Naive thymus-derived CD4-positive, alpha-beta T cell (primary cell): ENCODE measurements at regions of chr7 and their contacts with region 1.

Region 1: GRCh38 chr7:105210721-105211205 is 178.0 kb downstream of the SRPK2 start:
- DNase-seq: peak in 2 of 9 donors; percentile 8 to 9
- ATAC-seq: peak; percentile 55
- H3K4me3 ChIP-seq: no peak overlapping the region
- H3K4me3 Mint-ChIP-seq: peak overlapping the region in 9 of 10 donors; percentile 7 to 62 (median 42)
- H3K27ac ChIP-seq: peak overlapping the region; percentile 30
- H3K27ac Mint-ChIP-seq: peak overlapping the region; percentile 43 to 87 (median 82)
- H3K4me1 ChIP-seq: peaks cover 0 to 26% of the 10 kb centered on the region in 2 donors
- H3K4me1 Mint-ChIP-seq: peaks cover 40 to 99% (median 90%) of the 10 kb centered on the region in 7 donors
- H3K27me3 ChIP-seq: no peaks in the 10 kb centered on the region
- H3K27me3 Mint-ChIP-seq: no peaks in the 10 kb centered on the region

Region 2: DNA sequence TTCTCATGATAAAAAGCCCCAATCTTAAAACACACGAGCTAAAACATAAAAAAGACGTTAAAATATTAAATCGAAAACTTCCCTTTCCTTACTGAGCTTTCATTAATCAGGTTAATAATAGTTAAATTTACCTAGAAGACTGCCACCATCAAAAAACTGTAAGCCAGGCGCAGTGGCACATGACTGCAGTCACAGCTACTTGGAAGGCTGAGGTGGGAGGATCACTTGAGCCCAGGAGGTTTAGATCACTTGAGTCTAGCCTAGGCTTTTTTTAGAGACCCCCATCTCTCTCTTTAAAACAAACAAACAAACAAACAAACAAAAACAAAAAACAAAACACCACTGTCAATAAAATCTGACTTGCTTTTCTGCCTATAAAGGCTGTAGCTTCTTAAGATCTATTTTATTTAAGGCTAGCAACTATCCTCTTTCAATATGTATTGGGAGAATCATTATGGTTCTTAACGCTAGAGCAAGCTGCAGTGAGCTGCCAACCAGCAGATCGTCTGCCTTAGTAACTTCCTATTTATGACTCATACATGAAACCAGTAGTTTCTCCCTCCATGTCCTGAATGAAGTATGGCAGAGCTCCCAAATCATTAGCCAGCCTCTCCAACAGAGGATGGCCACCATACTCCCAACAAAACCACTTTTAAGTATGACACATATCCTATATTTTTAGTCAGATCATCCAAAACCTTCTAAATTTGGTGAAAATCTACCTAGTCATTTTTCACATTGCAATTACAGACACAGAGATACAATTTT is 14.3 kb after region 1 on chr7:
- CTCF ChIA-PET with region 1: interaction called, 3 read pairs
- POLR2A ChIA-PET with region 1: no interaction called
- intact Hi-C with region 1: loop called in 1 of 2 experiments (anchors 2 kb)
- DNase-seq: no peak
- ATAC-seq: peak; percentile 69
- H3K4me3 ChIP-seq: no peak overlapping the region
- H3K4me3 Mint-ChIP-seq: peak overlapping the region in 3 of 10 donors; percentile 1 to 35 (median 25)
- H3K27ac ChIP-seq: no peak overlapping the region
- H3K27ac Mint-ChIP-seq: peak overlapping the region in 5 of 9 donors; percentile 11 to 41 (median 38)
- H3K4me1 ChIP-seq: peaks cover 0 to 6% of the 10 kb centered on the region in 2 donors
- H3K4me1 Mint-ChIP-seq: peaks cover 15 to 52% (median 45%) of the 10 kb centered on the region in 7 donors
- H3K27me3 ChIP-seq: no peaks in the 10 kb centered on the region
- H3K27me3 Mint-ChIP-seq: no peaks in the 10 kb centered on the region

Region 3: GRCh38 chr7:105309235-105310169 is 98.7 kb after region 1 on chr7:
- CTCF ChIA-PET with region 1: no interaction called
- POLR2A ChIA-PET with region 1: no interaction called
- intact Hi-C with region 1: no loop called
- DNase-seq: no peak
- ATAC-seq: no peak
- H3K4me3 ChIP-seq: no peak overlapping the region
- H3K4me3 Mint-ChIP-seq: peak overlapping the region in 3 of 10 donors; percentile 1 to 14 (median 4)
- H3K27ac ChIP-seq: no peak overlapping the region
- H3K27ac Mint-ChIP-seq: peak overlapping the region in 5 of 9 donors; percentile 3 to 61 (median 19)
- H3K4me1 ChIP-seq: peaks cover 16% of the 10 kb centered on the region in 2 donors
- H3K4me1 Mint-ChIP-seq: peaks cover 29 to 78% (median 61%) of the 10 kb centered on the region in 7 donors
- H3K27me3 ChIP-seq: no peaks in the 10 kb centered on the region
- H3K27me3 Mint-ChIP-seq: no peaks in the 10 kb centered on the region

Region 4: GRCh38 chr7:106731187-106731586 is 1520.4 kb after region 1 on chr7:
- CTCF ChIA-PET with region 1: no interaction called
- POLR2A ChIA-PET with region 1: no interaction called
- intact Hi-C with region 1: loop called in 1 of 2 experiments (anchors 5 kb)
- DNase-seq: peak in 3 of 9 donors; percentile 11 to 23 (median 11)
- ATAC-seq: peak; percentile 34
- H3K4me3 ChIP-seq: no peak overlapping the region
- H3K4me3 Mint-ChIP-seq: peak overlapping the region in 6 of 10 donors; percentile 29 to 53 (median 42)
- H3K27ac ChIP-seq: no peak overlapping the region
- H3K27ac Mint-ChIP-seq: peak overlapping the region in 2 of 9 donors; percentile 25 to 37
- H3K4me1 ChIP-seq: peaks cover 0 to 9% of the 10 kb centered on the region in 2 donors
- H3K4me1 Mint-ChIP-seq: peaks cover 18 to 30% (median 24%) of the 10 kb centered on the region in 7 donors
- H3K27me3 ChIP-seq: no peaks in the 10 kb centered on the region
- H3K27me3 Mint-ChIP-seq: no peaks in the 10 kb centered on the region